CD14-positive monocyte (primary cell): ENCODE measurements at regions of chr19 and their contacts with region 1.

Region 1: DNA sequence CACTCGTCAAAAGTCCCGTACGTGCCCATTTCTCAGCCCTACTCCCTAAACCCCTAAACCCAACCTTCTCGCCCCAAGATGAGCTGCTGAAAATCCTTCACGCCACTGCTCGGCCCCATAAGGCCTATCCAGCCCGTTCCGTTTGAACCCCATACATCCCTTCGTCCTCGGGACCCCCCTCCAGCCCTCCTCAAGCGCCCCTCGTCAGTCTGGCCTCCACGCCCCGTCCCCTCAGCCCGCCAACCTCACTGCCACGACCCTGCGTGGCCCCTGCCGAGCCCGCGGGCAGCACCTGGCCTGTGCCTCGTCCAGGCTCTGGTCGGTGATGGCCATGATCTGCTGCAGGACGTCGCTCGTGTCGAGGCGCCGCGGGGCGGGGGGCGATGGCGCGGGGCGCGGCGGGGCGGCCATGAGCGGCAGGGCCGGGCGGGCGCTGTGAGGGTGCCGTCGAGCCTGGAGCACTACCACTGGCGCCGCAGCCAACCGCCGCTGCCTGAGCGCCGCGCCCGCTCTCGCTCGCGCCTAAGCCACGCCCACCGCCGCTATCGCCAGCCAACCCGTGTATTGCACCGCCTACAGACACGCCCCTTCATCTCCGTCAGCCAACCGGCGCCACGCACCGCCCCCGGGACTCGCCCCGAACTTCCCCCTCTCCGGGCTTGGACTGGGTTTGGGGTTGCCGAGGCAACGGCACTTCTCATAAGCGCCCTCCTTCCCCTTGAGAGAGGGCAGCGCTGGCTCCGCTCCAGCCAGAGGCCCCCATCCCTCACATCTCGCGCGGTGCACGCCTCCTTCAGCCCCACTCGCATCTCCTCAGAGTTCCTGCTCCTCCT is at the start of gene PBX4:
- DNase-seq: peak; percentile 97 to 99 (median 97)
- H3K4me3 ChIP-seq: peak within 1 kb of the TSS in 1 of 3 experiments; percentile 63
- H3K4me3 Mint-ChIP-seq: peak within 1 kb of the TSS; percentile 67 to 80
- H3K27ac ChIP-seq: peak within 1 kb of the TSS in 1 of 2 donors; percentile 36
- H3K27ac Mint-ChIP-seq: peak within 1 kb of the TSS; percentile 53 to 92 (median 76)
- H3K4me1 ChIP-seq: peaks cover 17 to 22% of the 10 kb centered on the region in 2 donors
- H3K4me1 Mint-ChIP-seq: peaks cover 17% of the 10 kb centered on the region
- H3K27me3 ChIP-seq: peaks cover 0 to 2% of the 10 kb centered on the region in 2 donors
- H3K27me3 Mint-ChIP-seq: peaks cover 4 to 11% (median 7%) of the 10 kb centered on the region in 3 donors
- CTCF ChIP-seq: no peak
- polyA plus RNA-seq, gene PBX4: 2.4 TPM in 1 of 3 donors, not detected in the others

Region 2: GRCh38 chr19:19320362-19321142 is 297.9 kb before region 1 on chr19 and contains the starts of genes MAU2 and SUGP1:
- intact Hi-C with region 1: loop called in 1 of 2 experiments (anchors 5 kb)
- DNase-seq: peak; percentile 84 to 85 (median 85)
- H3K4me3 ChIP-seq: peak within 1 kb of the TSS; percentile 87 to 99 (median 90)
- H3K4me3 Mint-ChIP-seq: peak within 1 kb of the TSS; percentile 90 to 99
- H3K27ac ChIP-seq: peak within 1 kb of the TSS; percentile 89 to 95
- H3K27ac Mint-ChIP-seq: peak within 1 kb of the TSS; percentile 97 to 100 (median 100)
- H3K4me1 ChIP-seq: peaks cover 24 to 25% of the 10 kb centered on the region in 2 donors
- H3K4me1 Mint-ChIP-seq: peaks cover 29% of the 10 kb centered on the region
- H3K27me3 ChIP-seq: no peaks in the 10 kb centered on the region
- H3K27me3 Mint-ChIP-seq: no peaks in the 10 kb centered on the region
- CTCF ChIP-seq: peak; percentile 41
- polyA plus RNA-seq, gene MAU2: 7.4 to 68.4 (median 14.5) TPM
- polyA plus RNA-seq, gene SUGP1: 17.4 to 38.8 (median 18.1) TPM

Region 3: GRCh38 chr19:19591133-19591825 is 27.2 kb before region 1 on chr19:
- intact Hi-C with region 1: loop called in 1 of 2 experiments (anchors 2 kb)
- DNase-seq: peak; percentile 90 to 98 (median 93)
- H3K4me3 ChIP-seq: no peak overlapping the region
- H3K4me3 Mint-ChIP-seq: peak overlapping the region in 1 of 2 donors; percentile 21
- H3K27ac ChIP-seq: peak overlapping the region; percentile 94 to 97
- H3K27ac Mint-ChIP-seq: peak overlapping the region; percentile 91 to 96 (median 94)
- H3K4me1 ChIP-seq: peaks cover 27 to 29% of the 10 kb centered on the region in 2 donors
- H3K4me1 Mint-ChIP-seq: peaks cover 24% of the 10 kb centered on the region
- H3K27me3 ChIP-seq: no peaks in the 10 kb centered on the region
- H3K27me3 Mint-ChIP-seq: peaks cover 0 to 5% (median 0%) of the 10 kb centered on the region in 3 donors
- CTCF ChIP-seq: no peak

Region 4: GRCh38 chr19:19657397-19657783 is 39.0 kb after region 1 on chr19:
- intact Hi-C with region 1: no loop called
- DNase-seq: no peak
- H3K4me3 ChIP-seq: no peak overlapping the region
- H3K4me3 Mint-ChIP-seq: no peak overlapping the region
- H3K27ac ChIP-seq: no peak overlapping the region
- H3K27ac Mint-ChIP-seq: no peak overlapping the region
- H3K4me1 ChIP-seq: peaks cover 14 to 15% of the 10 kb centered on the region in 2 donors
- H3K4me1 Mint-ChIP-seq: peaks cover 15% of the 10 kb centered on the region
- H3K27me3 ChIP-seq: no peaks in the 10 kb centered on the region
- H3K27me3 Mint-ChIP-seq: peaks cover 0 to 10% (median 2%) of the 10 kb centered on the region in 3 donors
- CTCF ChIP-seq: no peak

Region 5: DNA sequence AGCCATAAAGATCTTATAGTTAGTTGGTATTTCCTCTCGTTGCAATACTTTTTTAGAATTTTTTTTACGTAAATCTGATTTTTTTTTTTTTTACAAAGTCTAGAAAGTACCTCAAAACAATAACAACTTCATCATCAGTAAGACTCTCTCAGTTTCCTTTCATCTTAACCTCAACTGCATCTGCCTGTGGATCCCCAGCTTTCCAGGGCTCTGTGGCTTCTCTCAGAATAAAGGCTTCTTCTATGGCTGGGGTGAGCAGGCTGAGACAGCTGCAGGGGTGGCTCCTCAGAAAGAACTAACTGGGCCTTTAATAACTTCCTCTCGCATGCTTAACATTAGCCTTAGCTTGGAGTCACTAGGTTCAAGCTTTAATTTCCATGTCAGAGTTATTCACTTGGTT is 198.9 kb after region 1 on chr19:
- intact Hi-C with region 1: no loop called
- DNase-seq: no peak
- H3K4me3 ChIP-seq: no peak overlapping the region
- H3K4me3 Mint-ChIP-seq: no peak overlapping the region
- H3K27ac ChIP-seq: no peak overlapping the region
- H3K27ac Mint-ChIP-seq: no peak overlapping the region
- H3K4me1 ChIP-seq: peaks cover 0 to 8% of the 10 kb centered on the region in 2 donors
- H3K4me1 Mint-ChIP-seq: peaks cover 9% of the 10 kb centered on the region
- H3K27me3 ChIP-seq: no peaks in the 10 kb centered on the region
- H3K27me3 Mint-ChIP-seq: peaks cover 0 to 1% (median 0%) of the 10 kb centered on the region in 3 donors
- CTCF ChIP-seq: no peak